Activated T-helper 1 cell treated with anti-CD3 and anti-CD28 coated beads, Interleukin-12 subunit alpha, Interleukin-12 subunit beta, Interleukin-2, Interleukin-4 antibody, amounts not matched to agents 30 ng/mL and 10 ng/mL and 1 ng/mL, durations not matched to agents 14 hours and 24 hours and 36 hours (primary cell): ENCODE measurements at regions of chr10 and their contacts with region 1.

Region 1: GRCh38 chr10:96089670-96090462 is 40.2 kb upstream of the ZNF518A start:
- DNase-seq: peak; percentile 87
- H3K4me3 Mint-ChIP-seq: peak overlapping the region; percentile 90
- H3K27ac Mint-ChIP-seq: peak overlapping the region; percentile 93
- H3K4me1 Mint-ChIP-seq: peaks cover 14% of the 10 kb centered on the region
- H3K27me3 Mint-ChIP-seq: peaks cover 18% of the 10 kb centered on the region

Region 2: GRCh38 chr10:95508730-95509129 is 581.1 kb before region 1 on chr10:
- intact Hi-C with region 1: no loop called
- DNase-seq: no peak
- H3K4me3 Mint-ChIP-seq: no peak overlapping the region
- H3K27ac Mint-ChIP-seq: no peak overlapping the region
- H3K4me1 Mint-ChIP-seq: no peaks in the 10 kb centered on the region
- H3K27me3 Mint-ChIP-seq: peaks cover 13% of the 10 kb centered on the region

Region 3: GRCh38 chr10:96073722-96074121 is 16.1 kb before region 1 on chr10:
- intact Hi-C with region 1: loop called (anchors 1 kb)
- DNase-seq: peak; percentile 8
- H3K4me3 Mint-ChIP-seq: peak overlapping the region; percentile 2
- H3K27ac Mint-ChIP-seq: peak overlapping the region; percentile 7
- H3K4me1 Mint-ChIP-seq: peaks cover 35% of the 10 kb centered on the region
- H3K27me3 Mint-ChIP-seq: no peaks in the 10 kb centered on the region

Region 4: DNA sequence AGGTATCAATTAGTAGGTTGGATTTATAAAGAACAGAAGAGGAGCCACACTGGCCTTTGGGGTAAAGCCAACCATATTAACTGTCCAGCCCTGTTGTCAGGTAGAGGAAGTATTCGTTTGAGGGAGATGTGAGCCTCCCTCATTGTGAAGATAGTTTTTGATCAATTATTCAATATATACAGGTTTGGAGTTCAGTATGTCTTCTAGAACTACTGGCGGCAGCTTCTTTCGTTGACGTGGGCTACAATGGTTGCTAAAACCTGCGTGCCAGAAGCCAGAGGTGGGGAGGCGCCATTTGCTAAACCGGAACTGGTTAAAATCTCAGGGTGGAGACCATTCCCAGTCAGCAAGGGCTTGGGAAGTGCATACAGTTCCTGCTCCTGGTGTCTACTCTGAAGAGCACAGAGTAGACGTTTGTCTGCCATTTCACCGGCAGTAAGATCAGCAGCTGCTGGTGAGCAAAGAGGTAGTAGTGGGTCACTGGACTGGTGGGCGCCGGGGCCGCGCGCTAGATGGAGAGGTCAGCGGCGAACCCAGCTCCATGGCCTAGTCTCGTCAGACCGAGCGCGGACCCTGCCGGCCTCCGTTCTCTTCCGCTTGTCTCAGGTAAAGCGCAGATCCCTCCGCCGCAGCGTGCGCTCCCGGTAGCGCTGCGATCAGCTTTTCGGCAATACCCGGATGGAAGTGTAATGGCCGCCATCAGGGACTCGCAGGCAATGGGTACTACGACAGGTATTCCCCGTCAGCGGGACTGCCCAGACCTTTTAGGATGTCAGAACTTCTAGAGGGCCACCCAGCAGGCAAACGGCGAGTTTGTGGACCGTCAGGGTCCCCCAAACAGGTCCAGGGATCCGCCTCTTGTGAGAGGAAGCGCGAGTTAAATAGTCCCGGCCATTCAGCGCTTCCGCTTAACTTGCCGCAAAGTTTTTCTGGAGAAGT is 39.8 kb after region 1 on chr10 and contains the start of gene ZNF518A:
- intact Hi-C with region 1: loop called (anchors 1 kb)
- DNase-seq: peak; percentile 86
- H3K4me3 Mint-ChIP-seq: peak within 1 kb of the TSS; percentile 90
- H3K27ac Mint-ChIP-seq: peak within 1 kb of the TSS; percentile 99
- H3K4me1 Mint-ChIP-seq: peaks cover 33% of the 10 kb centered on the region
- H3K27me3 Mint-ChIP-seq: peaks cover 27% of the 10 kb centered on the region
- total RNA-seq, gene ZNF518A: 14.3 and 16.2 TPM in 2 replicates